GM12878 (cell line): ENCODE measurements at regions of chr17 and their contacts with region 1.

Region 1: GRCh38 chr17:76191896-76192295 is 48.4 kb downstream of the RNF157 start:
- DNase-seq: peak; percentile 85
- ATAC-seq: peak; percentile 84
- H3K4me3 ChIP-seq: no peak overlapping the region
- H3K27ac ChIP-seq: peak overlapping the region; percentile 81
- H3K4me1 ChIP-seq: peaks cover 44% of the 10 kb centered on the region
- H3K27me3 ChIP-seq: no peaks in the 10 kb centered on the region
- CTCF ChIP-seq: no peak
- EP300 ChIP-seq: peak; percentile 53 to 80; a peak in 3 of 4 replicates
- POLR2A ChIP-seq: no peak
- RAD21 ChIP-seq: no peak

Region 2: GRCh38 chr17:76208120-76208519 is 16.2 kb after region 1 on chr17:
- CTCF ChIA-PET with region 1: interaction called, 3 read pairs
- POLR2A ChIA-PET with region 1: interaction called, 26 read pairs
- RAD21 ChIA-PET with region 1: interaction called, 12 read pairs
- SMC1A ChIA-PET with region 1: interaction called, 25 read pairs
- in situ Hi-C with region 1: no loop called
- intact Hi-C with region 1: no loop called
- DNase-seq: peak; percentile 66
- ATAC-seq: peak; percentile 95
- H3K4me3 ChIP-seq: no peak overlapping the region
- H3K27ac ChIP-seq: peak overlapping the region; percentile 51
- H3K4me1 ChIP-seq: peaks cover 17% of the 10 kb centered on the region
- H3K27me3 ChIP-seq: no peaks in the 10 kb centered on the region
- CTCF ChIP-seq: no peak
- EP300 ChIP-seq: no peak
- POLR2A ChIP-seq: no peak
- RAD21 ChIP-seq: no peak

Region 3: GRCh38 chr17:76232342-76232741 is 40.4 kb after region 1 on chr17:
- CTCF ChIA-PET with region 1: interaction called, 5 read pairs
- POLR2A ChIA-PET with region 1: interaction called, 5 read pairs
- RAD21 ChIA-PET with region 1: interaction called, 10 read pairs
- SMC1A ChIA-PET with region 1: interaction called, 13 read pairs
- in situ Hi-C with region 1: no loop called
- intact Hi-C with region 1: loop called (anchors 5 kb)
- DNase-seq: no peak
- ATAC-seq: no peak
- H3K4me3 ChIP-seq: no peak overlapping the region
- H3K27ac ChIP-seq: no peak overlapping the region
- H3K4me1 ChIP-seq: peaks cover 9% of the 10 kb centered on the region
- H3K27me3 ChIP-seq: no peaks in the 10 kb centered on the region
- CTCF ChIP-seq: no peak
- EP300 ChIP-seq: no peak
- POLR2A ChIP-seq: no peak
- RAD21 ChIP-seq: no peak

Region 4: GRCh38 chr17:76240461-76241203 is 48.7 kb after region 1 on chr17 and contains the start of gene RNF157:
- CTCF ChIA-PET with region 1: interaction called, 20 read pairs
- POLR2A ChIA-PET with region 1: interaction called, 11 read pairs
- RAD21 ChIA-PET with region 1: interaction called, 3 read pairs
- SMC1A ChIA-PET with region 1: interaction called, 13 read pairs
- in situ Hi-C with region 1: no loop called
- intact Hi-C with region 1: loop called (anchors 5 kb)
- DNase-seq: no peak
- ATAC-seq: peak; percentile 74
- H3K4me3 ChIP-seq: peak within 1 kb of the TSS; percentile 56; the same call in 1 of the 2 replicates
- H3K27ac ChIP-seq: no peak within 1 kb of the TSS
- H3K4me1 ChIP-seq: peaks cover 20% of the 10 kb centered on the region
- H3K27me3 ChIP-seq: peaks cover 0 to 3% of the 10 kb centered on the region in 2 experiments; a peak in 2 of 4 replicates
- CTCF ChIP-seq: no peak
- EP300 ChIP-seq: no peak
- POLR2A ChIP-seq: no peak
- RAD21 ChIP-seq: no peak
- polyA plus RNA-seq, gene RNF157: 5.2 to 9.5 TPM

Region 5: DNA sequence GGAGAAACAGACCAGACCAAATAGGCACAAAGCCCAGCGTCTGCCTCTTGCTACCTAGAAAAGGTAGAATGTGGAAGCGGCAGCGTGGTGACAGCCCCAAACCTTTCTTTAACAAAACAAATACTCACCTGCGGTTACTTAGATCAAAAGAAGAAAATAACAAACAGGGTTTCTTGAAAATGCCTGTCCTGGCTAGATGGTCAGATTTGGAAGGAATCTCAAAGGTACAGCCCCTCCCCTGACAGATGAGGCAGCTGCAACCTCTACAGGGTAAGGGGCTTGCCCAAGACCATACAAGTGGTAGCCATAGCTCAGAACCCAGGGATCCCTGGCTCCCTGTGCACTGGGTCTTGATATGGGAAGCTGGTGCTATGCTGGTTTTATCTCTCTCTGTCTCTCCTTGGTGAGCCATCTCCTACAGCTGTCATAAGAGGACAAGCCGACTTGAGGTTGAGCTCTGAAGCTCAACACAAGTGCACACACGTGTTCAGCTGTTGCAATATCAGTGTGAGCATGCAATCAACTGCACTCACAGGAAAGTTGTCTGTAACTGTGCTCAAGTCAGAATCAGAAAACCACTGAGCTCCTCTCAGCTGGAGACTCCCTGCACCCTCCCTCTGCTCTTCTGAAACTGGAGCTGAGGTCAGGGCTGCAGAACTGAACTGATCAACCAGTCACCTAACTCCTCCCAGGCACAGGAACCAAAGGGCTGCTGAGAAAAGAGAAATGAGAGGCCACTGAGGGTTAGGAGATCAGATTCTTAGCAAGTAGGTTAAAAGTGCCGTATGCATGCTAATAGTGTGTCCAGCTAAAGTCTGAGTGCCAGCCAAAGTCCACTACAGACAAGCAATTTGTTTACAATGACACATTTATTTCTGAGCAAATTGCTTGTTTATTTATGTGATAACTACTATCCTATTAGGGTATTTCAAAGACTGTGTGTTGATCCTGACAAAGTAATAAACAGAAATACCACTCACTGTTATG is 54.5 kb after region 1 on chr17:
- CTCF ChIA-PET with region 1: interaction called, 20 read pairs
- POLR2A ChIA-PET with region 1: interaction called, 7 read pairs
- RAD21 ChIA-PET with region 1: interaction called, 35 read pairs
- SMC1A ChIA-PET with region 1: interaction called, 13 read pairs
- in situ Hi-C with region 1: no loop called
- intact Hi-C with region 1: loop called (anchors 5 kb)
- DNase-seq: peak; percentile 98
- ATAC-seq: peak; percentile 100
- H3K4me3 ChIP-seq: no peak overlapping the region
- H3K27ac ChIP-seq: peak overlapping the region; percentile 80
- H3K4me1 ChIP-seq: peaks cover 34% of the 10 kb centered on the region
- H3K27me3 ChIP-seq: no peaks in the 10 kb centered on the region
- CTCF ChIP-seq: no peak
- EP300 ChIP-seq: peak; percentile 68 to 81
- POLR2A ChIP-seq: peak; percentile 83
- RAD21 ChIP-seq: 0 out of 2 replicates have a peak, but pooled peaks have one; percentile 1